Ovary (tissue), 10 donors: ENCODE measurements at regions of chr6 and their contacts with region 1.

Region 1: DNA sequence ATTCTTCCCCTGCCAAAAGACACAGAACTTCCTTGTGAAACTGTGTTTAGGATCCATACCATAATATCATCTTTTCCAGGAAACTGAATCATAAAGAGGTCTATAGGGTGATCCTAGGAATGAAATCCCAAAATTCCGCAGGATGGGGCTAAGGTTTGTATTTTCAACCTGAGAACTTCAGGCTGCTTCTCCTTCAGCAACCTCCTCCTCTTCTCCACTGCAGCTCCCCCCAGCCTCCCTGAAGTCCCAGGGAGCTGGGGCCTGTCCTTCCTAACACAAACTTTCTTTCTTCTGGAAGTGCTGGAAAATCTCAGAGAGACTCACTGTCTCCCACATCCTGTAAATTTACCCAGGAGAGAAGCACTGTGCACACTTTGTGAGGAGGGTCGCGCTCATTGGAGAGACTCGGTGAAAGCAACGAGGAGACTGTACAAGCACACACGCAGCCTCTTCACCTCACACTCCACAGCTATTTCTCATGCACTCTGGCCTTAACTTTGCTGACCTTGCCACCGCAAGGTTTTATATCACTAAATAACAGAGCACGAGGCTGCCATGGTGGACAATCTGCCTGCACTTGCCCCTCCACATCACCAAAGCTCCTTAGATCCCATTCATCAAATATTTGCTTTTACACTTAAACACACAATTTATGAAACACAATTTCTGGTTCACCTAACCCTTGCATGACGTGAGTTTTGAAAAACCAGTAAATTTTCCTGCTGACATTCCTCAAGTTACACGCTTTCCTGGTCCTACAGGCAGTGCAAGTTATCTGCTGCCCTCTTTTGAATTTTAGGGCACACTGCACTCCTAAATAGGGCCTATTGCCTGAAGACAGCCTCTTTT is 14.3 kb downstream of the ID4 start:
- DNase-seq: peak in 1 of 5 donors; percentile 49
- H3K4me3 ChIP-seq: peak overlapping the region; percentile 13
- H3K27ac ChIP-seq: no peak overlapping the region
- H3K4me1 ChIP-seq: peaks cover 2% of the 10 kb centered on the region
- H3K27me3 ChIP-seq: no peaks in the 10 kb centered on the region
- CTCF ChIP-seq: peak; percentile 39 to 83 (median 70)
- EP300 ChIP-seq: no peak
- POLR2A ChIP-seq: no peak

Region 2: GRCh38 chr6:18595774-18596530 is 1255.5 kb before region 1 on chr6:
- intact Hi-C with region 1: loop called in 1 of 4 experiments (anchors 5 kb)
- DNase-seq: peak in 4 of 5 donors; percentile 20 to 71 (median 44)
- H3K4me3 ChIP-seq: no peak overlapping the region
- H3K27ac ChIP-seq: no peak overlapping the region
- H3K4me1 ChIP-seq: no peaks in the 10 kb centered on the region
- H3K27me3 ChIP-seq: no peaks in the 10 kb centered on the region
- CTCF ChIP-seq: peak; percentile 65 to 79 (median 66)
- EP300 ChIP-seq: no peak
- POLR2A ChIP-seq: no peak

Region 3: DNA sequence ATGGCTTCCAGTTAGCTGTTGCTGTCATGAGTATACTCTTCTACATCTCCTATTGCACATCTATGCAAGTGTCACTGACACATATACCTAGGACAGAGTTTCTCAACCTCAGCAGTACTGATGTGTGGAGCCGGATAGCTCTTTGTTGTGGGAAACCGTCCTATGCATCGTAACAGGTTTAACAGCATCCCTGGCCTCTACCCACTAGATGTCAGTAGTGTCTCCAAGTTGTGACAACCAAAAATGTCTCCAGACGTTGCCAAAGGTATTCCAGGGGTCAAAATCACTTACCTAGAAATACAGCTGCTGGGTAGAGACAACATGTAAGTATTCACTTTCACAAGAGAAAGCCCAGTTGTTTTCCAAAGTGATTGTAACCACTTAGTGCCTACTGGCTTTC is 826.7 kb before region 1 on chr6:
- intact Hi-C with region 1: loop called in 1 of 4 experiments (anchors 10 kb)
- DNase-seq: no peak
- H3K4me3 ChIP-seq: no peak overlapping the region
- H3K27ac ChIP-seq: no peak overlapping the region
- H3K4me1 ChIP-seq: no peaks in the 10 kb centered on the region
- H3K27me3 ChIP-seq: no peaks in the 10 kb centered on the region
- CTCF ChIP-seq: no peak
- EP300 ChIP-seq: no peak
- POLR2A ChIP-seq: no peak